HepG2 (cell line): ENCODE measurements at regions of chr2 and their contacts with region 1.

Region 1: GRCh38 chr2:119290859-119291587 is 67.4 kb downstream of the STEAP3 start:
- DNase-seq: peak; percentile 75
- ATAC-seq: peak; percentile 97
- H3K4me3 ChIP-seq: peak overlapping the region in 1 of 3 experiments; percentile 2; a peak in 1 of 6 replicates
- H3K27ac ChIP-seq: no peak overlapping the region
- H3K4me1 ChIP-seq: peaks cover 27% of the 10 kb centered on the region
- H3K27me3 ChIP-seq: no peaks in the 10 kb centered on the region; a peak in 2 of 5 replicates
- CTCF ChIP-seq: peak; percentile 99
- EP300 ChIP-seq: no peak
- POLR2A ChIP-seq: no peak
- RAD21 ChIP-seq: peak; percentile 84

Region 2: DNA sequence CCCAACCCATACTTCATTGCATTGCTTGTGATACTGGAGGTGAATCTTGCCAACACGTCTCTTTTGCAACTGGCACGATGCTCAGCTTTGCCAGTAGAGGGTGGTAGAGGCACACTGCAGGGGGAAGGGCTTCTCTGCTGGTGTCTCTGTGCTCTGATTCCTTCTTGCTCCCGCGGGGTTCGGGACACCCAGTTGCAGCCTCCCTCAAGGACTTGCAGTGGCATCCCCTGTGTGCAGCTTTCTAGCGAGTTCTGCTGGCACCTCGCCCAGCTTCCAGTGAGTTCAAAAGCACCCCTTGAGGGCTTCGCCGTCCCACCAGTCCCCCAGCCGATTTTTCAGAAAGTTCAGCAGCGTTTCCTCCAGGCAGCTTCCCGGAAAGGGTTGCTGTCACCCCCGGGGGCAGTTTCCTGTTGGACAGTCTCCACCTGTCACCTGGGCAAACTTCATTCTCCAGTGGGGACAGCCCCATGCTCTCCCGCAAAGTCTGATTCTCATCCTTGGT is 408.3 kb before region 1 on chr2:
- CTCF ChIA-PET with region 1: no interaction called
- POLR2A ChIA-PET with region 1: no interaction called
- in situ Hi-C with region 1: no loop called
- intact Hi-C with region 1: loop called (anchors 1 kb)
- DNase-seq: peak; percentile 59
- ATAC-seq: peak; percentile 90
- H3K4me3 ChIP-seq: peak overlapping the region in 2 of 3 experiments; percentile 17 to 53; a peak in 1 of 6 replicates
- H3K27ac ChIP-seq: no peak overlapping the region
- H3K4me1 ChIP-seq: 0 out of 2 replicates have a peak, but pooled peaks cover 4% of the 10 kb centered on the region
- H3K27me3 ChIP-seq: no peaks in the 10 kb centered on the region
- CTCF ChIP-seq: peak; percentile 91
- EP300 ChIP-seq: no peak
- POLR2A ChIP-seq: no peak
- RAD21 ChIP-seq: peak; percentile 47; the same call in 1 of the 2 replicates

Region 3: GRCh38 chr2:119028327-119029174 is 262.5 kb before region 1 on chr2:
- CTCF ChIA-PET with region 1: no interaction called
- POLR2A ChIA-PET with region 1: no interaction called
- in situ Hi-C with region 1: no loop called
- intact Hi-C with region 1: loop called (anchors 5 kb)
- DNase-seq: peak; percentile 45
- ATAC-seq: peak; percentile 81
- H3K4me3 ChIP-seq: no peak overlapping the region
- H3K27ac ChIP-seq: no peak overlapping the region
- H3K4me1 ChIP-seq: no peaks in the 10 kb centered on the region
- H3K27me3 ChIP-seq: peaks cover 0 to 4% of the 10 kb centered on the region in 2 experiments; a peak in 1 of 5 replicates
- CTCF ChIP-seq: peak; percentile 70
- EP300 ChIP-seq: no peak
- POLR2A ChIP-seq: no peak
- RAD21 ChIP-seq: no peak

Region 4: DNA sequence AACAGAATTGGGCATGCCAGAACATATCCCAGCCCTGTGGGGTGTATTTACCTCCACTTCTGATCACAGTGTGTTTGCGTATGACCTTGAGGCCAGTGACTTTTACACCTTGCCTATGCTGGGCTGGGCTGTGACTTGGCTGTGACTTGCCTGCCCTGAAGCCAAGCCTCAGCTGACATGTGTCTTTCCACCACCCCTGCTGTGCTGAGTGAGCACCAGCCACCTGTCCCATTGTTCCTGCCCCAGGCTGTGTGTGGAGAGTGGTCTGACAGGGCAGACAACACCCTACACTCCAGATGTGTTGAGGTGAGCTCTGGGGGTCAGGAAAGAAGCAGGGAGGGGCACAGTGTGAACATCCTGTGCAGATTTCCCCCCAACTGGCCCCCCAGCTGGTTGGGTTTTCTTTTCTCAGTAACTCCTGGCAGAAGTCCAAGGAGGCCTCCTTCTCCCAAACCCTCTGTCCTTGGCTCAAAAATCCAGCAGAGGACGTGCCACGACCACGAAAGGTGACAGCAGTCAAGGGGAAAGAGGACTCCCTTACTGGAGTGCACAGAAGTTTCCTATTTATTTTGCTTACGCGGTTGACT is 72.5 kb before region 1 on chr2:
- CTCF ChIA-PET with region 1: interaction called, 7 read pairs
- POLR2A ChIA-PET with region 1: interaction called, 4 read pairs
- in situ Hi-C with region 1: no loop called
- intact Hi-C with region 1: loop called (anchors 1 kb)
- DNase-seq: peak; percentile 69
- ATAC-seq: peak; percentile 25
- H3K4me3 ChIP-seq: peak overlapping the region in 1 of 3 experiments; percentile 17; a peak in 1 of 6 replicates
- H3K27ac ChIP-seq: no peak overlapping the region
- H3K4me1 ChIP-seq: peaks cover 52% of the 10 kb centered on the region
- H3K27me3 ChIP-seq: 0 out of 5 replicates have a peak, but pooled peaks cover 0 to 4% of the 10 kb centered on the region in 2 experiments
- CTCF ChIP-seq: peak; percentile 87
- EP300 ChIP-seq: no peak
- POLR2A ChIP-seq: no peak
- RAD21 ChIP-seq: peak; percentile 75

Region 5: GRCh38 chr2:119264781-119265692 is 26.0 kb before region 1 on chr2:
- CTCF ChIA-PET with region 1: no interaction called
- POLR2A ChIA-PET with region 1: no interaction called
- in situ Hi-C with region 1: no loop called
- intact Hi-C with region 1: loop called (anchors 1 kb)
- DNase-seq: peak; percentile 51
- ATAC-seq: peak; percentile 98
- H3K4me3 ChIP-seq: no peak overlapping the region
- H3K27ac ChIP-seq: no peak overlapping the region
- H3K4me1 ChIP-seq: peaks cover 10% of the 10 kb centered on the region
- H3K27me3 ChIP-seq: no peaks in the 10 kb centered on the region
- CTCF ChIP-seq: peak; percentile 96
- EP300 ChIP-seq: no peak
- POLR2A ChIP-seq: no peak
- RAD21 ChIP-seq: peak; percentile 83

Region 6: GRCh38 chr2:119326938-119327337 is 35.9 kb after region 1 on chr2:
- CTCF ChIA-PET with region 1: no interaction called
- POLR2A ChIA-PET with region 1: no interaction called
- in situ Hi-C with region 1: no loop called
- intact Hi-C with region 1: no loop called
- DNase-seq: no peak
- ATAC-seq: no peak
- H3K4me3 ChIP-seq: no peak overlapping the region
- H3K27ac ChIP-seq: no peak overlapping the region
- H3K4me1 ChIP-seq: 0 out of 2 replicates have a peak, but pooled peaks cover 6% of the 10 kb centered on the region
- H3K27me3 ChIP-seq: no peaks in the 10 kb centered on the region
- CTCF ChIP-seq: no peak
- EP300 ChIP-seq: no peak
- POLR2A ChIP-seq: no peak
- RAD21 ChIP-seq: no peak